Right cardiac atrium (tissue), 5 donors: ENCODE measurements at regions of chr14 and their contacts with region 1.

Region 1: GRCh38 chr14:90903101-90903500 is 86.9 kb upstream of the TTC7B start:
- DNase-seq: peak in 2 of 3 donors; percentile 35 to 49
- ATAC-seq: peak; percentile 68 to 85
- H3K4me3 ChIP-seq: no peak overlapping the region
- H3K27ac ChIP-seq: no peak overlapping the region
- H3K4me1 ChIP-seq: no peaks in the 10 kb centered on the region
- H3K27me3 ChIP-seq: no peaks in the 10 kb centered on the region

Region 2: GRCh38 chr14:91177073-91178034 is 274.3 kb after region 1 on chr14:
- intact Hi-C with region 1: loop called (anchors 2 to 10 kb)
- DNase-seq: peak in 1 of 3 donors; percentile 55
- ATAC-seq: peak; percentile 46 to 62
- H3K4me3 ChIP-seq: no peak overlapping the region
- H3K27ac ChIP-seq: no peak overlapping the region
- H3K4me1 ChIP-seq: no peaks in the 10 kb centered on the region
- H3K27me3 ChIP-seq: no peaks in the 10 kb centered on the region

Region 3: DNA sequence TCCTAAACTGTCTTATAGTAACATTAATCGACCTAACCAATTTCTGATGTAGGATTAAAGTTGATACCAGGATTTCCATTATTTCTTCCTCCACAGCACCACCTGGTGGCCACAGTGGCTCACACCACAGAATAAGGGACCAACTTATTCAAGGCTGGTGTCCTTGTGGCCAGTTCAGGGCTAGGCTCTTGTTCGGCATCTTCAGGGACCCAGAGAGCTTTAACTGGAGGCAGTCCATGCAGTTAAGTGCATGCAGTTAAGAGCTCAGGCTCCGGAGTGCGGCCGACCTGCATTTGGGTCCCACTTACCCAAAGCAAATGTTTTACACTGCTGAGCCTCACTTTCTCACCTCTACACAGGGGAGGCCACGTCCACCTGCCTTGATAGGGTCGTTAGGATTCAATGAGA is 383.4 kb after region 1 on chr14:
- intact Hi-C with region 1: loop called in 3 of 4 experiments (anchors 5 to 10 kb)
- DNase-seq: peak; percentile 72 to 87 (median 81)
- ATAC-seq: peak; percentile 70 to 73
- H3K4me3 ChIP-seq: no peak overlapping the region
- H3K27ac ChIP-seq: no peak overlapping the region
- H3K4me1 ChIP-seq: no peaks in the 10 kb centered on the region
- H3K27me3 ChIP-seq: no peaks in the 10 kb centered on the region